RWPE1 (cell line): ENCODE measurements at regions of chr11 and their contacts with region 1.

Region 1: GRCh38 chr11:61627567-61628445 is 46.9 kb upstream of the SYT7 start:
- DNase-seq: peak; percentile 71
- H3K27ac ChIP-seq: peak overlapping the region; percentile 56; the same call in 1 of the 2 replicates
- CTCF ChIP-seq: peak; percentile 80

Region 2: DNA sequence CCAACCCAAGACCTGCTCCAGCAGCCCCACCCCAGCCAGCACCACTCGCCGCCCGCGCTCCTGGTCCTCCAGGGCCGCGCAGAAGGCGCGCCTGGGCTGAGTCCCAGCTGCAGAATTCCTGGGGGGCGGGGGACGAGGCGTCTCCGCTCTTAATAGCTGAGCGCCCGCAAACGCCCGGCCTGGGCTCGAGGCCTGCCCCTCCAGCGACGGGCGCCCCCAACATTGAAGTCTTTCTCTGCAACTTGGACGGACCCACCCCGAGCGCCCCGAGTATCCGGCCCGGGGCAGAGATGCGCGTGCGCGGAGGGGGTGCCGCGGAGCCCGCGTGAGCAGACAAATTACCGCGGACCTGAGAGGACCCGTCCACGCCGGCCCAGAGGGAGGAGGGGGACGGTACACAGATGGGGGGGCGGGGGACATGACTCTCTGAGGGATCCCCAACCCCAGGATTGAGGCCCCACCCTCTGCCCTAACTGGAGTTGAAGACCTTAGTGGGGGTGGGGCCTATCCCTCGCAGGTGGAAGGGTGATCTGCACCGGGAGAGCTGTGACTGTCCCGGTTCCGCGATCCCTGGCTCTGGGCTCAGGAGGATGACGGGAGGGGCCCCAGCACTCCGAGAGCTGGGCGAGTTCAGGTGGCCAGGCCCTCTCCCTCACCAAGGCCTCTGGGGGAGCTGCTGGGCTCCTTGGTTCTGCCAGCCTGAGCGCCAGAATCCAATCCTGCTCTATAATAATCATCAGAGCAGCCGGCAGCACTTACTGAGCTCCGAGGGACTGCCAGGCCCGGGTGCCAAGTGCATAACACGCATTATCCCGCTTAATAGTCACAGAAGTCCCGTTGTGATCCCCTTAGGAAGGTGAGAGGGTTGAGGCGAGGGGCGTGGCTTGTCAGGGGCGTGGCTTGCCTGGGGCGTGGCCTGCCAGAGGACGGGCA is 40.0 kb before region 1 on chr11:
- CTCF ChIA-PET with region 1: interaction called, 16 read pairs
- POLR2A ChIA-PET with region 1: no interaction called
- DNase-seq: peak; percentile 71
- H3K27ac ChIP-seq: peak overlapping the region; percentile 89
- CTCF ChIP-seq: peak; percentile 49

Region 3: GRCh38 chr11:61639816-61640443 is 12.1 kb after region 1 on chr11:
- CTCF ChIA-PET with region 1: interaction called, 10 read pairs
- POLR2A ChIA-PET with region 1: no interaction called
- DNase-seq: no peak
- H3K27ac ChIP-seq: no peak overlapping the region
- CTCF ChIP-seq: no peak